ENCODE measurements at regions of chr11 and their contacts with region 1.

Region 1: GRCh38 chr11:108497317-108498045 is 703 bp downstream of the POGLUT3 start:
- DNase-seq: peak; percentile 91
- H3K4me3 Mint-ChIP-seq: peak overlapping the region; percentile 89
- H3K27ac Mint-ChIP-seq: peak overlapping the region; percentile 97
- H3K4me1 Mint-ChIP-seq: peaks cover 22% of the 10 kb centered on the region
- H3K27me3 Mint-ChIP-seq: no peaks in the 10 kb centered on the region

Region 2: GRCh38 chr11:108084811-108085210 is 412.7 kb before region 1 on chr11:
- intact Hi-C with region 1: no loop called
- DNase-seq: no peak
- H3K4me3 Mint-ChIP-seq: no peak overlapping the region
- H3K27ac Mint-ChIP-seq: no peak overlapping the region
- H3K4me1 Mint-ChIP-seq: peaks cover 1% of the 10 kb centered on the region
- H3K27me3 Mint-ChIP-seq: no peaks in the 10 kb centered on the region

Region 3: DNA sequence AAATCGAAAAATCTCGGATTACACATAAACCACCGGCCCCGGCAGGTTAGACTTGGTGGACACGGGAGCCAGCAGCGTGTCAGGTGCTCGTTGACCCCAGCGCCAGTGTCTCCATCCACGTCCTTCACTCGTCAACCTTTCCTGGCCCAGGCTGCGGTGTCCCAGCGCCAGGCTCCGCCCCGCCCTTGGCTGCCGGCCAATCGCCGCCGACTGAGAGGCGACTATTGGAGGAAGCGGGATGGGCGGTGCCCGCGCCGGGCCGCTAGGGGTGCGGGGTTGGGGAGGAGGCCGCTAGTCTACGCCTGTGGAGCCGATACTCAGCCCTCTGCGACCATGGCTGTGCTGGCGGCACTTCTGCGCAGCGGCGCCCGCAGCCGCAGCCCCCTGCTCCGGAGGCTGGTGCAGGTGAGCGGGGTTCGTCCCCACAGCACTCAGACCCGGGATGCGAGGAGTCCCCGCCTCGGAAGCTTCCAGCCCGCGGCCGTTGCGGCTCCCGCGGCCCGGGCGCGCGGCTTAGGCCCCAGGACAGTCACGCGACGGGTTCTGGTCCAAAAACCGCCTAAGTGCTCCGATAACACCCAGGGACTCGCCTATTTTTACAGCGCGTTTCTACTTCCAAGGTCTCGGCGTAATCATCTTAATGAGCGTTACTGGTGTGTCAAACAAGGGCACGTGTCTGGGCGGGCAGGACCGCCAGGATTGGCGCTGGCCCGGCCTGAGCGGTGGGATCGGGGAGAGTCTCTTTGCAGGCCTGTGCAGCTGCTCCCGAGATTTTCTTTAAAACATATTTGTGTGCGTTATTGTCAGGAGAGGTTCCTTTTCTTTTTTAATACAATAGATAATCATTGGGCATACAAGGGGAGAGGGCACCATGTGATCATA is 376.0 kb before region 1 on chr11 and contains the start of gene ACAT1:
- intact Hi-C with region 1: loop called (anchors 1 kb)
- DNase-seq: peak; percentile 99
- H3K4me3 Mint-ChIP-seq: peak within 1 kb of the TSS; percentile 87
- H3K27ac Mint-ChIP-seq: peak within 1 kb of the TSS; percentile 84
- H3K4me1 Mint-ChIP-seq: peaks cover 33% of the 10 kb centered on the region
- H3K27me3 Mint-ChIP-seq: no peaks in the 10 kb centered on the region
- total RNA-seq, gene ACAT1: 65.0 and 65.9 TPM in 2 replicates

Region 4: DNA sequence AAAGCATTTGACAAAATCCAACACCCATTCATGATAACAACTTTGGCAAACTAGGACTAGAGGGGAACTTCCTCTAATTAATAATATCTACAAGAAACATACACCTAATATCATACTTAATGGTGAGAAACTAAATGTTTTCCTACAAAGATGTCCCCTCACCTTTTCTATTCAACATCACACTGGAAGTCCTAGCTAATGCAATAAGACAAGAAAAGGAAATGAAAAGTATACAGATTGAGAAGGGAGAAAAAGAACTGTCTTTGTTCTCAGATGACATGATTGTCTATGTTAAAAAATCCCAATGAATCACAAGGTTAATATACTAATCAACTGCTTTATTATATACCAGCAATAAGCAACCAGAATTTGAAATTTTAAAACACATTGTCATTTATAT is 82.5 kb before region 1 on chr11:
- intact Hi-C with region 1: no loop called
- DNase-seq: no peak
- H3K4me3 Mint-ChIP-seq: no peak overlapping the region
- H3K27ac Mint-ChIP-seq: no peak overlapping the region
- H3K4me1 Mint-ChIP-seq: no peaks in the 10 kb centered on the region
- H3K27me3 Mint-ChIP-seq: peaks cover 3% of the 10 kb centered on the region

Region 5: DNA sequence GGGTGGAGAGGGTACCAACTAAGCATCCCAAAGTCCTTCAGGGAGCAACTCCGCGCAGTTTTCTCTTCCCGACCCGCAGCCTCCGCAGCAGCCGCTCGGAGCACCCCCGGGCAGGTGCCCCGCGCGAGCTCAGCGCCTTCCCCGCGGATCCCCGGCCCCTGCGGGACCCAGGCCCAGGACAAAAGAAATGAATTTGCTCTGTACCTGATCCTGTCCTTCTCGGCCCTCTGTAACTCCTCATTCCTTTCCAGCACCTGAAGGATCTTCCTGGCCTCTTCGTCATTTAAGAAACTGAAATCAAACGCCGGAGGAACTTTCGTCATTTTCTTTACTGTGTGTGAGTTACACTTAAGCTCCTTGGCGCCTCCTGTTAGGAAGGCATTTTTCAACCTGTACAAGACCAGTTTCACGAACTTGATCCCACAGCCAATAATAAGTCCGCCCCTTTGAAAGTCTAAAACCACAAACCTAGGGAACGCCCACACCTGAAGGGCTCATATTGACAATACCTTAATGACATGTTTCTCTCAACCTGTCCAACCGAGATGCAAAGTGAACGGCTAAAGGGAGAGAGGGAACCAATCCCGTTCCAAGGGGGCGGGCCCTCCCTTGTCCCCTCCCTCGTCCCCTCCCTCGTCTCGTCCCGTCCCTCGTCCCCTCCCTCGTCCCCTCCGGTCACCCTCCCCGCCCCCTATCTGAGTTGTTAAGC is 95.9 kb after region 1 on chr11 and contains the start of gene EXPH5:
- intact Hi-C with region 1: loop called (anchors 1 kb)
- DNase-seq: peak; percentile 95
- H3K4me3 Mint-ChIP-seq: peak within 1 kb of the TSS; percentile 91
- H3K27ac Mint-ChIP-seq: peak within 1 kb of the TSS; percentile 85
- H3K4me1 Mint-ChIP-seq: peaks cover 16% of the 10 kb centered on the region
- H3K27me3 Mint-ChIP-seq: peaks cover 49% of the 10 kb centered on the region
- total RNA-seq, gene EXPH5: 0.90 and 0.91 TPM in 2 replicates

Region 6: GRCh38 chr11:108664730-108665525 is 167.4 kb after region 1 on chr11 and contains the start of gene DDX10:
- intact Hi-C with region 1: loop called (anchors 2 kb)
- DNase-seq: peak; percentile 100
- H3K4me3 Mint-ChIP-seq: peak within 1 kb of the TSS; percentile 97
- H3K27ac Mint-ChIP-seq: peak within 1 kb of the TSS; percentile 99
- H3K4me1 Mint-ChIP-seq: peaks cover 38% of the 10 kb centered on the region
- H3K27me3 Mint-ChIP-seq: peaks cover 10% of the 10 kb centered on the region
- total RNA-seq, gene DDX10: 68.9 and 71.6 TPM in 2 replicates

Region 7: GRCh38 chr11:108788565-108789199 is 291.2 kb after region 1 on chr11:
- intact Hi-C with region 1: no loop called
- DNase-seq: no peak
- H3K4me3 Mint-ChIP-seq: no peak overlapping the region
- H3K27ac Mint-ChIP-seq: no peak overlapping the region
- H3K4me1 Mint-ChIP-seq: peaks cover 33% of the 10 kb centered on the region
- H3K27me3 Mint-ChIP-seq: no peaks in the 10 kb centered on the region